Endothelial cell of umbilical vein (primary cell): ENCODE measurements at regions of chr5 and their contacts with region 1.

Region 1: DNA sequence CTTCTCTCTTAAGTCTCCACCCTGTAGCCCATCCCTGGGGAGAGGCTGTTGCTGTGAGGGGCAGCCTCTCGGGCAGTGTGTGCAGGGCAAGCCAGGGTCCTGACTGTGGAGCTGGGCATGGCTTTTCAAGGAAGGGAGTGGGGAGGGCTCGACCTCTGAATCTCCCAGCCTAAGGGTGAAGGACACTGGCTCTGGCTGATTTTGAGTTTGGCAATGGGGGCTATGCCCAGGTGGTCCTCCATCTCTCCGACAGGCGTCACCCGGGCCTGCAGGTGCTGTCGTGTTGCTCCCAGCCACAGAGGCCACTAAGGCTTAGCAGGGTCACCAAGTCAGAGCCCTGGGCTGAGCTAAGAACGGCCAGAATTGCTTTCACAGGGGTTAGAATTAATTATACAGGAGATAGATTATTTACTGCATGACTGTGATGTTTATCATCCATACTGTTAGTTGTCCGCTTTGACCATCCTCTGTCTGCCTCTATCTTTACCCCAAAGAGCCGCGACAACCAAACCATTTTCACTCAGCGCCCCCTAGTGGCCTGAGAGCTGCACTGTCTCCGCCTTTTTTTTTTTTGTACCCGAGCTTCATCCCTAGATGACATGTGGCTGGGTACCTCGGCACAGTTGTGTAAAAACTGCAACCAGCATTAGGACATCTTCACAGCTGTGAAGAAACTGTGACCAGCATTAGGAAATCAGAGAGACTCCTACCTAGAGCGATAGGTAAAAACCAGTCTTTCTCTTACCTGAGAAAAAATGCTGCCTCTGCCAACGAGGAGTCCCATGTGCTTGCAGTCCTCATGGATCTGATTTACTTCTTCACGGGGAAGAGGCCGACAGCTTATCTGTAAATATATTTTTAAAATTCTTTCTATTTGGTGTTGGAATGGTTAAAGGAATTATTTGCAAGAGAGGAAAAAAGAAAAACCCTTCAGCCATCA is 44.5 kb downstream of the AGXT2 start:
- DNase-seq: peak; percentile 55
- H3K4me3 ChIP-seq: no peak overlapping the region
- H3K27ac ChIP-seq: no peak overlapping the region
- H3K4me1 ChIP-seq: no peaks in the 10 kb centered on the region
- H3K27me3 ChIP-seq: peaks cover 6 to 9% of the 10 kb centered on the region in 2 experiments
- CTCF ChIP-seq: peak; percentile 88 to 90
- POLR2A ChIP-seq: no peak

Region 2: GRCh38 chr5:34957857-34958690 is 45.2 kb before region 1 on chr5:
- CTCF ChIA-PET with region 1: interaction called, 24 read pairs
- POLR2A ChIA-PET with region 1: no interaction called
- dilution Hi-C with region 1: no loop called
- intact Hi-C with region 1: loop called (anchors 1 kb)
- DNase-seq: peak; percentile 45
- H3K4me3 ChIP-seq: no peak overlapping the region
- H3K27ac ChIP-seq: no peak overlapping the region
- H3K4me1 ChIP-seq: no peaks in the 10 kb centered on the region
- H3K27me3 ChIP-seq: no peaks in the 10 kb centered on the region
- CTCF ChIP-seq: peak in 1 of 2 donors; percentile 45
- POLR2A ChIP-seq: no peak

Region 3: GRCh38 chr5:35016174-35017051 is 13.1 kb after region 1 on chr5:
- CTCF ChIA-PET with region 1: interaction called, 13 read pairs
- POLR2A ChIA-PET with region 1: no interaction called
- dilution Hi-C with region 1: no loop called
- intact Hi-C with region 1: no loop called
- DNase-seq: no peak
- H3K4me3 ChIP-seq: no peak overlapping the region
- H3K27ac ChIP-seq: no peak overlapping the region
- H3K4me1 ChIP-seq: no peaks in the 10 kb centered on the region
- H3K27me3 ChIP-seq: no peaks in the 10 kb centered on the region
- CTCF ChIP-seq: no peak
- POLR2A ChIP-seq: no peak

Region 4: DNA sequence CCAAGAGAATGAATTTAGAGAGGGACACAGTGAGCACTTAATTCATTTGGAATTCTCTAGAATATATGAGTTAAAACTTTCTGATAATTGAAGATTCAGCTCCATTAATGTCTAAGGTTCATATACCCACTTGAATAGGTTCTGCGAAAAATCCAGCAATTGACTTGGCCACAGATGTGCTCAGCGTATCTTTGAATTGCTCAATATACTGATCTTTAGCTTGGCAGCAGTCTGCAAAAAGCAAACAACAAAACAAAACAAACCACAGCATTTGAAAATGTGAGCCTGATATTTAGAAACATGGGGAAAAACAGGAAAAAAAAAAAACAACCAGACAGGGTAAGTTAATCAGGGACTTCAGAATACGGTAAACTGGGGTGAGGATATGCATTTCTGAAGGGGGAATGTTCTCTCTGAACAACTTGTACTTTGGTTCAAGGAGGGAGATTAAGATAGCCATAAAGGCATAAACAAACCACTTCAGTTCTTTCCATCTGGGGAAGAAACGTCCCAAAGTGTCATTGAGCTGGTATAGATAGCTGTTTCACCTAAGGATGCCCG is 23.1 kb after region 1 on chr5:
- CTCF ChIA-PET with region 1: interaction called, 13 read pairs
- POLR2A ChIA-PET with region 1: no interaction called
- dilution Hi-C with region 1: no loop called
- intact Hi-C with region 1: no loop called
- DNase-seq: no peak
- H3K4me3 ChIP-seq: no peak overlapping the region
- H3K27ac ChIP-seq: no peak overlapping the region
- H3K4me1 ChIP-seq: no peaks in the 10 kb centered on the region
- H3K27me3 ChIP-seq: peaks cover 0 to 2% of the 10 kb centered on the region in 2 experiments
- CTCF ChIP-seq: no peak
- POLR2A ChIP-seq: no peak